Endothelial cell of umbilical vein (primary cell): ENCODE measurements at regions of chr3 and their contacts with region 1.

Region 1: DNA sequence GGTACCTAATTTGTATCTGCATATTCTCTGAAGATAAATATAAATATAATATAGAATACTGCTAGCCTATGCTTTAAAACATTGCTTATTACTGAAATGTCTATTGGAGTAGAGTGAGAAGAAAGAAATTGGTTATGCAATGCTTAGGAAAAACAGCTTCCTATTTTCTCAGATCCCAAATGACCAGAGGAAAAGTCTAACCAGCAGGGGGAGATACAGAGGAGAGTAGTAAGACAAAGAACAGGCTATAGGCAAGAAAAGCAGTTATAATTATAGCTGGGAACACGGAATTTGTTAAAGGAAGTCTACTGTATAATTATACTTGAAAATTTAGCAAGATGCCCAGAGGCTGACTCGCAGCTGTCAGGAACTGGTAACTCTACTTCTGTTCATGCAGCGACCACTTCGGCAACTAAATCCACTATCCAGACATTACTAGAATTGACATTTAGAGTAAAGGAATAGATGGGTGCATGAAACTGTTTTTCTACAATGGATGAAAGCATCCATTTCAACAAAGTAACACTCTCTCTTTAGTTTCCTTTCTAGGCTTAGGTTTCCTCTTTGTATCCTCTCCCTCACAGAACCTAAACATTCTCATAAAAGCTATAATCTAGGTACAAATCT is 97.2 kb downstream of the TBC1D5 start:
- DNase-seq: peak; percentile 76
- H3K4me3 ChIP-seq: no peak overlapping the region
- H3K27ac ChIP-seq: no peak overlapping the region
- H3K4me1 ChIP-seq: peaks cover 8% of the 10 kb centered on the region
- H3K27me3 ChIP-seq: no peaks in the 10 kb centered on the region
- CTCF ChIP-seq: peak; percentile 51 to 61
- POLR2A ChIP-seq: no peak

Region 2: GRCh38 chr3:17544632-17545031 is 100.6 kb before region 1 on chr3:
- CTCF ChIA-PET with region 1: interaction called, 21 read pairs
- POLR2A ChIA-PET with region 1: no interaction called
- dilution Hi-C with region 1: no loop called
- intact Hi-C with region 1: no loop called
- DNase-seq: no peak
- H3K4me3 ChIP-seq: no peak overlapping the region
- H3K27ac ChIP-seq: no peak overlapping the region
- H3K4me1 ChIP-seq: no peaks in the 10 kb centered on the region
- H3K27me3 ChIP-seq: no peaks in the 10 kb centered on the region
- CTCF ChIP-seq: no peak
- POLR2A ChIP-seq: no peak

Region 3: DNA sequence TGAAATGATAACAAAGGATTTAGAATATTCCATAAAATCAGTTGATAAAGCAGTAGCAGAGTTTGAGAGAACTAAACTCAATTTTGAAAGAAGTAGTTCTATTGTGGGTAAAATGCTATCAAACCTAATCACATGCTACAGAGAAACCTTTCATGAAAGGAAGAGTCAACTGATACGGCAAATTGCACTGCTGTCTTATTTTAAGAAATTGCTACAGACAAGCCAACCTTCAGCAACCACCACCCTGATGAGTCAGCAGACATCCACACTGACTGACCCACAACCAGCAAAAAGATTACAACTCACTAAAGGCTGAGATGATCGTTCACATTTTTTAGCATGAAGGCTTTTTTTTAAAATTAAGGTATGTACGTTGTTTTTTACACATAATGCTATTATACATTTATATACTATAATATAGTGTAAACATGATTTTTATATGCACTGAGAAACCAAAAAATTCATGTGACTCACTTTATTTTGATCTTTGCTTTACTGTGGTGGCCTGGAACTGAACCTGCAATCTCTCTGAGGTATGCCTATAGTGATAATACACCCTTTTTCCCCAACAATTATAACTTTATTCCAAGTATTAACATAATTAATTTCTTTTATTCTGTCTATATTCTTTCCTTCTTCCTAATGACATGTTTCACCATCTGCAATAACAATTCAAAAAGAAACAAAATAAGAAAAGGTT is 12.6 kb before region 1 on chr3:
- CTCF ChIA-PET with region 1: interaction called, 30 read pairs
- POLR2A ChIA-PET with region 1: no interaction called
- dilution Hi-C with region 1: no loop called
- intact Hi-C with region 1: no loop called
- DNase-seq: peak; percentile 29
- H3K4me3 ChIP-seq: no peak overlapping the region
- H3K27ac ChIP-seq: no peak overlapping the region
- H3K4me1 ChIP-seq: peaks cover 19% of the 10 kb centered on the region
- H3K27me3 ChIP-seq: no peaks in the 10 kb centered on the region
- CTCF ChIP-seq: no peak
- POLR2A ChIP-seq: no peak

Region 4: GRCh38 chr3:17683542-17684207 is 38.5 kb after region 1 on chr3:
- CTCF ChIA-PET with region 1: interaction called, 10 read pairs
- POLR2A ChIA-PET with region 1: no interaction called
- dilution Hi-C with region 1: no loop called
- intact Hi-C with region 1: no loop called
- DNase-seq: no peak
- H3K4me3 ChIP-seq: no peak overlapping the region
- H3K27ac ChIP-seq: no peak overlapping the region
- H3K4me1 ChIP-seq: no peaks in the 10 kb centered on the region
- H3K27me3 ChIP-seq: no peaks in the 10 kb centered on the region
- CTCF ChIP-seq: no peak
- POLR2A ChIP-seq: no peak

Region 5: DNA sequence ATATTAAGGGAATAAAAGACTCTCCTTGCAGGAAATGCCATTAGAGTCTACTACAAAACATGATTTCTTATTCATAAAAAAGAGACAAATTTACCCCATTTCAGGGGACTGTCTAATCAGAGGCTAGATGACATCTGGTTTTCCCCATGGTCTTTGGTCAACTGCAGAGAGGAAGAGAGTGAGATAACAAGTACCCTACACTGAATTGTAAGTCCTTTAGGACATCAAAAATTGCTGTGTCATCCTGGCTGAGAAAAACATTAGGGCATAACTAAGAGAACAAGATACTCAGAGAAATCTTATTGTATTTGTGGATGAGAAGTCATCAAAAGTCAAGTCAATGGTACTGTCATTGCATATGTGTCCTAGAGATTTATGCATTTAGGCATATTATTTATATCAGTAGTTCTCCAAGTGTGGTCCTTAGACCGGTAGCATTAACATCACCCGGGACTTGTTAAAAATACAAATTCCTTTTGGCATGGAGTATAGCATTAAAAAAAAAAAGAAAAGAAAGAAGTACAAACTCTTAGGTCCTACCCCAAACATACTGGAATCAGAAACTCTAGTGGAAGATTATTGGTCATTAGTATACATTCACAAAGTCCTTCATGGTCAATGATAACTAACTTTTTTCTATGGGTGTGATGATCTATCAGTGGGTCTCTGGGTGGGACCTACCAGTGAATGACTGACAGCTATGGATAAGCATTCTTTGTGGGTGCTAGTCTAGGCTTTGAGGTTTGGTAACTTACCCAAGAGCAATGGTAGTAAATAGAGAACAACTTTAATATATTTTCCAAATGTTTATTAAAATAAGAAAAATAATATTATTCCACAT is 126.2 kb after region 1 on chr3:
- CTCF ChIA-PET with region 1: interaction called, 10 read pairs
- POLR2A ChIA-PET with region 1: no interaction called
- dilution Hi-C with region 1: no loop called
- intact Hi-C with region 1: no loop called
- DNase-seq: no peak
- H3K4me3 ChIP-seq: no peak overlapping the region
- H3K27ac ChIP-seq: no peak overlapping the region
- H3K4me1 ChIP-seq: no peaks in the 10 kb centered on the region
- H3K27me3 ChIP-seq: no peaks in the 10 kb centered on the region
- CTCF ChIP-seq: no peak
- POLR2A ChIP-seq: no peak

Region 6: DNA sequence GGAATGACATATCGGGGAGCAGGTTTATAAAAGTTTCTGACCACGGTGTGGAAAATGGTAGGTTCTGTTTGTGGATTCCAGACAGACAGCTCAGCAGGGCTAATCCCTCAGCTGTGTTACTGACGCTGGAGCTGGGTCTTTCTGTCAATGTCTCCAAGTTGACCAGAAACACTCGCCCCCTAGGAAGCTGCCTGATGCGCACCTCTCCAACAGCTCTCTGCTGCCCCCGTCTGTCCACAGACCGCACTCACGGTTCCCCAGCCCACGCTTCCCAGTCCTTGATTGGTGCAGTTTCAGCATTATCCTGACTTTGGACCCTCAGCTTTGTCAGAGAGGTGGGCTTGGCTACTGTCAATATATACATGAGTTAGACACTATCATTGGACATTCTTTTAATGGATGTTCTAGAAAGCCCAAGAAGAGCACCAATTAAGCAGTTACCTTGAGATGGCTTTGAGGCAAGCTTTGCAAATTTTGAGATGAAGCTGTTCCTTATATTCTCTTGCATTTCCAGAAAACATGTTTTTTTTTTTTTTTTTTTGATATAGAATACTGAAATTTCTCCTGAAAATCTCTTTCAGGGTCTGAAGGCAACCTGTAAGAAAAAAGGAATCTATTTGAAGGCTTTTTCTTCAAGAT is 196.1 kb after region 1 on chr3:
- CTCF ChIA-PET with region 1: interaction called, 207 read pairs
- POLR2A ChIA-PET with region 1: no interaction called
- dilution Hi-C with region 1: no loop called
- intact Hi-C with region 1: loop called (anchors 1 kb)
- DNase-seq: peak; percentile 64
- H3K4me3 ChIP-seq: no peak overlapping the region
- H3K27ac ChIP-seq: no peak overlapping the region
- H3K4me1 ChIP-seq: no peaks in the 10 kb centered on the region
- H3K27me3 ChIP-seq: peaks cover 0 to under 1% of the 10 kb centered on the region in 2 experiments
- CTCF ChIP-seq: peak; percentile 96
- POLR2A ChIP-seq: no peak